Heart left ventricle (tissue), 16 donors: ENCODE measurements at regions of chr1 and their contacts with region 1.

Region 1: DNA sequence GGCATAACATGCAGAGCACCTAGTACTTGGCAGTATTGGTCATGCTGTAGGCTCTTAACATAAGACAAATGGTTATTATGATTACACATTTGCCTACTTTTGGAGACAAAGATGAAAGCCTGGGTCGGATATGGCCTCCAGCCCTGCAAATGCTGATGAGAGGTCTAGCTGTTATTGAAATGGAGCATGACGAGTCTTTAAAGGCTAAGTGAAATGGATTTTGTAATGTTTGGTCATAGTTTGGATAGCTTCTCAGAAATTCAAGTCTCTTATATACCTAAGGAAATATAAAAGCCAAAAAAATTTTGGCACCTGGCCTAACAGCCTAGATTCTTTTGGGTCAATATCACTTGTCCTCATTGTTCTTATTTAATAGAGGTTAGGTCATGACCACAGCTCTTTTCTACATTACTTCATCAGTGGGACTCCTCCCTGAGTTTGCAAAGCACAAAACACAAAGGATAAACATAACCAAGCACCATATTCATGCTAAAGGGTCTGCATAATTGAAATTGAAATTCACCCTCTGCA is 69.2 kb upstream of the WLS start:
- DNase-seq: no peak
- ATAC-seq: no peak
- H3K4me3 ChIP-seq: no peak overlapping the region
- H3K27ac ChIP-seq: no peak overlapping the region
- H3K4me1 ChIP-seq: no peaks in the 10 kb centered on the region
- H3K27me3 ChIP-seq: no peaks in the 10 kb centered on the region
- CTCF ChIP-seq: no peak
- POLR2A ChIP-seq: no peak

Region 2: DNA sequence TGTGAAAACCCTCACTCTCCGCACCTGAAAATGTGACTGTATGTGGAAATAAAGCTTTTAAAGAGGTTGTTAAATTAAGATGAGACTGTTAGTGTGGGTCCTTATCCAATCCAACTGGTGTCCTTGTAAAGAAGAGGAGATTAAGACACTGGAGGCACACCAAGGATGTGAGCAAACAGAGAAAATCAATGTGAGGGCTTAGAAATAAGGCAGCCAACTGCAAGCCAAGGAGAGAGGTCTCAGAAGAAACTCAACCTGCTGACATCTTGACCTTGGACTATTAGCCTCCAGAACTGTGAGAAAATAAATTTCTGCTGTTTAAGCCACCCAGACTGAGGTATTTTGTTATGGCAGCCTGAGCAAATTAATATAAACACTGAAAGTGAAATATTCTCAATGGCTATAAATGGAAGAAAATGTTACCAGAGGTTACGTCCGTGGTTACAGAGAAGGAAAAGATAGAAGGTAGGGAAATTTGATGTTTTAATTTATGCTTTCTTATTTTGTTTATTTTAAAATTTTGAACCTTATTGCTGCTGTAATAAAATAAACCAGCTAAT is 46.8 kb before region 1 on chr1:
- intact Hi-C with region 1: loop called in 1 of 10 experiments (anchors 10 kb)
- DNase-seq: no peak
- ATAC-seq: no peak
- H3K4me3 ChIP-seq: no peak overlapping the region
- H3K27ac ChIP-seq: peak overlapping the region in 1 of 12 donors; percentile 27
- H3K4me1 ChIP-seq: no peaks in the 10 kb centered on the region
- H3K27me3 ChIP-seq: no peaks in the 10 kb centered on the region
- CTCF ChIP-seq: no peak
- POLR2A ChIP-seq: no peak